Lower leg skin (tissue), 4 donors: ENCODE measurements at regions of chr5 and their contacts with region 1.

Region 1: DNA sequence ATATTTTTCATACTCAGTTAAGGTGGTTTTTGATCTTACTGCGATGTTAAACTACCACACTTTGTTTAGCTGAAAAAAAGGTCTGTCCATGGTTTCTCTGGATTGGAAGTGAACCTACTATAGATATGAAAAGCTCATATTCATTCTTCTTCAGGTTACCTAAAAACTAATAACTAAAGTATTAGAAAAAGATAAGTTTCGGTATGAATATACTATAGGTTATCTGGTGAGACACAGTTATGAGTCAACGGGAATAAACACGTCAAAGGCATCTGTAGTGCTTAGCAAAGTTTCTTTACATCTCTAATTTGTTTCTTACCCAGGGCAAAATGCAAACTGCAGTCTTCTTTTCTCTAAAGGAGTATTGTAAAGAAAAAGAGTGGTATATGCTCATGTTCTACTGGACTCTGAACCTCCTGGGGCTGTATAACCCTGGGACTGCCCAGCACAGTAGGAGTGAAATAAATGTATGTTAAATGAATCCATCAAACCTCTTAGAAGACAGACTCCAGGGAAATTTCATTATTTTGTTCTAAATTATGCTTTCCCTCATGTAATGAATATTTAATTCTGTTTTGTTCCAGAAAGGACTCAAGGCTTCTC is 521.9 kb downstream of the PDE4D start:
- DNase-seq: no peak
- H3K4me3 ChIP-seq: no peak overlapping the region
- CTCF ChIP-seq: no peak
- POLR2A ChIP-seq: no peak

Region 2: DNA sequence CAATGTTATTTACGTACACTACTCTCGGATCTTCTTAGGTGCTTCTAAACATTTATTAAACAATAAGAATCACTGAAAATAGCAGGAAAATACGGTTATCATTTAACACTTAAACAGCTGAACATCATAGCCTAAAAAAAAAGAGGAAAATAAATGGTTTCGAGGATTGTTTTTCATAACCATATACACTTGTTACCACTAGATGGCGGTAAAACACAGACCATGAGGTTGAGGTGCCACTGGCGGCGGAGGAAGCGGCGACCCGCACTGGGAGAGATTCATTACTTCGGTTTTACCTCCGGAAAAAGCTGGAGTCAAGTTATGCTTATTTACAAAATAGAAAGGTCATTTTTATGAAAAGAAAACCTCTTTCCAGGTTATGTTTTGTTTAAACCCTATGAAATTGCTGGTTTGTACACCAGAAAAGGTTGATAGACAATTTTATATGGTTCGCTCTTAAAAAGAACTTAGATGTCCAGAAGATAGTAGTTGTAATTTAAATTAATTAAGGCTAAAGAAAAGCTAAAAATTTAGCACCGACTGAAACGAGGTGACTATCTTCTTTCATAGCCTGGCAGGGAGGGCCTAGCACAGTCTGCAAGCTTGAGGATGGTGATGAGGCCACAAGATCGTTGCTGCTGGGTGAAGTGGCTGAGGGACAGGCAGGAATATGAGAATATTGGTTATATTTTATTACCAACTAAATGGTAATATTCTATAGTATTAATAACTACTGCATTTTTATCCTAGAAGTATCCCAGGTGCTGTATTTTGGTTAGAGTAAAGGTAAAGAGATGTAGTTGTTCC is 183.0 kb before region 1 on chr5:
- intact Hi-C with region 1: loop called (anchors 10 kb)
- DNase-seq: peak; percentile 52 to 90
- H3K4me3 ChIP-seq: no peak overlapping the region
- CTCF ChIP-seq: peak in 1 of 3 donors; percentile 55
- POLR2A ChIP-seq: no peak

Region 3: DNA sequence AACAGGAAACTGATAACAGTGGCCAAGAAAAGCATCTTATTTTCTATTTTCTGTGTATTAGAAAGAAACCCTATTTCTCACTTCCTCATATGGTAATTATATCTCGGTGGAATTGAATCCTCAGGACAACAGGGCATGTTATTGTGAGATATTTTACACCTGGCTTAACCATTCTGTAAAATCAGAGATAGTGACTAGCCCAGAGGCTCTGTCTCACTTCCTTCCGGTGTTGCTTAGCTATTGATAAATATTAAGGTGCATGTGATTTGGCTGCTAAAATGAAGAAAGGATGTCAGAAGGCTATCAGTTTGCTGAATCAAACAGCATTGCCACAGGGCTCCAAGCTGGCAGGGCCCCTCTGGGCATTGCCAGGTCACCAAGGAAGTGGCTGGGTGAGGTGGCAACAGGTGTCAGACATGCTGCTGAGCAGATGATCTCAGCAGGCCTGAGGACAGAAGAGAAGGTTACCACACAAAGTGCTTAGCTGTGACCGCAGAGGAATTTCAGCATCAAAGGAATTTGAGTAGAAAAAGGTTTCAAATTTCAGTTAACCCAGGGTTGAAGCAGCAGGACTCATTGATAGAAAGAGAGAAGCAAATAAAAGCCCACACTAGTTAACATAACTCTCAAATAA is 191.2 kb after region 1 on chr5:
- intact Hi-C with region 1: no loop called
- DNase-seq: no peak
- H3K4me3 ChIP-seq: no peak overlapping the region
- CTCF ChIP-seq: no peak
- POLR2A ChIP-seq: no peak